OCI-LY7 (cell line): ENCODE measurements at regions of chr11 and their contacts with region 1.

Region 1: GRCh38 chr11:10792398-10792975 is 16.2 kb downstream of the EIF4G2 start:
- DNase-seq: peak; percentile 82
- H3K4me3 ChIP-seq: no peak overlapping the region
- H3K27ac ChIP-seq: no peak overlapping the region
- H3K4me1 ChIP-seq: no peaks in the 10 kb centered on the region
- CTCF ChIP-seq: peak; percentile 88

Region 2: GRCh38 chr11:10455637-10456487 is 336.6 kb before region 1 on chr11:
- CTCF ChIA-PET with region 1: no interaction called
- POLR2A ChIA-PET with region 1: no interaction called
- intact Hi-C with region 1: no loop called
- DNase-seq: peak; percentile 93
- H3K4me3 ChIP-seq: peak overlapping the region; percentile 73
- H3K27ac ChIP-seq: peak overlapping the region; percentile 93
- H3K4me1 ChIP-seq: peaks cover 72% of the 10 kb centered on the region
- CTCF ChIP-seq: no peak

Region 3: GRCh38 chr11:10803676-10804075 is 11.2 kb after region 1 on chr11:
- CTCF ChIA-PET with region 1: no interaction called
- POLR2A ChIA-PET with region 1: interaction called, 14 read pairs
- intact Hi-C with region 1: no loop called
- DNase-seq: no peak
- H3K4me3 ChIP-seq: no peak overlapping the region
- H3K27ac ChIP-seq: no peak overlapping the region
- H3K4me1 ChIP-seq: peaks cover 26% of the 10 kb centered on the region
- CTCF ChIP-seq: no peak

Region 4: GRCh38 chr11:10838083-10838482 is 45.6 kb after region 1 on chr11:
- CTCF ChIA-PET with region 1: no interaction called
- POLR2A ChIA-PET with region 1: no interaction called
- intact Hi-C with region 1: no loop called
- DNase-seq: no peak
- H3K4me3 ChIP-seq: no peak overlapping the region
- H3K27ac ChIP-seq: no peak overlapping the region
- H3K4me1 ChIP-seq: peaks cover 5% of the 10 kb centered on the region
- CTCF ChIP-seq: no peak

Region 5: DNA sequence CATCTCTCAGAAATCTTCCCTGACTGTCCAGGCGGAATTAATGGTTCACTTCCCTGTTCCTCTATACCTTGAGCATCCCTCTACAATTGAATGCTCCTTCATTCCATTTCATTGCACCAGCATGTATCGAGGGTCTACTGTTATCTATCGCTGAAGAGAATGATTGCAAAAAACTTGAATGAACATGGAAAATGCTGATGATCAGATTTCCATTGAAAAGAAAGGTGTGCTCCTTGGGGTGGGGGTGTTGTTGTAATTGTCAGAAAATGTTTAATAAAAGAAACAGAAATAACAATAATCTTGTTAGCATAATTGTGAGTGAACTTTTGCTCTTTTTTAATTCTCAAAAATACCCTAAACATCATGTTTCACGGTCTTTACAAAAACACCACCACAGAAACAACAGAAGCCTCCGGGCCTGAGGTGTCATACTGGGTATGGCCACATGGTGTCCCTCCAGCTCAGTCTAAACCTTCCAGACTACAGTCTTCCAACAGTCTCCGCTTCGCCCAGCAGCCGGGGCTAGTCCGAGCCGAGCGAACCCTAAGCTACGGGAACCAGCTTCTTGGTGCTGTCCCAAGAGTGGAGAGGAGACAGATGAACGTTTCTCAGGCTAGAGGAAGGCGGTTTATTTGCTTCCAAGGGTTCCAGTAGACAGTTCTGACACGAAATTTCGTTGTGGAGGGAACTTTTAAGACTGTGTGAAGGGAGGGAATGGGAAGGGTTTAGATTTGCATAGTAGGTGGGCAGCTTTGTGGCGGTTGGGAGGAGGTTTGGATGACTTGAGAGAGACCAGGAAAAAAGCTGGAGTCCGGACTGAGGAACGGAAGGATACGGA is 141.2 kb after region 1 on chr11:
- CTCF ChIA-PET with region 1: interaction called, 6 read pairs
- POLR2A ChIA-PET with region 1: no interaction called
- intact Hi-C with region 1: loop called (anchors 2 kb)
- DNase-seq: peak; percentile 80
- H3K4me3 ChIP-seq: peak overlapping the region; percentile 49
- H3K27ac ChIP-seq: no peak overlapping the region
- H3K4me1 ChIP-seq: peaks cover 6% of the 10 kb centered on the region
- CTCF ChIP-seq: peak; percentile 98

Region 6: DNA sequence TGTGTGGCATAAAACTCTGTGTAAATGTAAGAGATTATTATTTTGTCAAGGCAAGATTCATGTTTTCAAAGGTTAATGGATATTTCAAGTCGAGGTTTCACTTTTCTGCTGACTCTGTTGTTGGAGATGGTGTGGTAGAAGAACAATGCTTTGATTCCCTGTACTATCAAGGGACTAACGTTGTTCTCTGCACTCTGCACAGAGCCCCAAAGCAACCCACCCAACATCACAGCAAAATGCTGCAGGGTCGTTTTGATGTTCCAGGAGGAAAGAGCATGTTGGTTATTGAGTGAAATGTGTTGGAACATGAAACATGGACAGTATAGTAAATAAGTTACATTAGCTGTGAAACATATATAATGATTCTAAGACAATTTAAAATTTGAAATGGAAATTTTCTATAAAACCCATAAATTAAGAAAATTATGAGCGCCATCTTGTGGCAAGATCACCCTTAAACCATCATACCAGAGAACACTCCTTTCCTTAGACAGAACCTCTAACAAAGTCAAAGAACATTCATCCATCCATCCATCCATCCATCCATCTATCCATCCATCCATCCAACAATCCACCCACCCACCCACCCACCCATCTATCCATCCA is 229.7 kb after region 1 on chr11:
- CTCF ChIA-PET with region 1: interaction called, 7 read pairs
- POLR2A ChIA-PET with region 1: interaction called, 5 read pairs
- intact Hi-C with region 1: loop called (anchors 1 kb)
- DNase-seq: peak; percentile 38
- H3K4me3 ChIP-seq: no peak overlapping the region
- H3K27ac ChIP-seq: no peak overlapping the region
- H3K4me1 ChIP-seq: no peaks in the 10 kb centered on the region
- CTCF ChIP-seq: peak; percentile 78

Region 7: DNA sequence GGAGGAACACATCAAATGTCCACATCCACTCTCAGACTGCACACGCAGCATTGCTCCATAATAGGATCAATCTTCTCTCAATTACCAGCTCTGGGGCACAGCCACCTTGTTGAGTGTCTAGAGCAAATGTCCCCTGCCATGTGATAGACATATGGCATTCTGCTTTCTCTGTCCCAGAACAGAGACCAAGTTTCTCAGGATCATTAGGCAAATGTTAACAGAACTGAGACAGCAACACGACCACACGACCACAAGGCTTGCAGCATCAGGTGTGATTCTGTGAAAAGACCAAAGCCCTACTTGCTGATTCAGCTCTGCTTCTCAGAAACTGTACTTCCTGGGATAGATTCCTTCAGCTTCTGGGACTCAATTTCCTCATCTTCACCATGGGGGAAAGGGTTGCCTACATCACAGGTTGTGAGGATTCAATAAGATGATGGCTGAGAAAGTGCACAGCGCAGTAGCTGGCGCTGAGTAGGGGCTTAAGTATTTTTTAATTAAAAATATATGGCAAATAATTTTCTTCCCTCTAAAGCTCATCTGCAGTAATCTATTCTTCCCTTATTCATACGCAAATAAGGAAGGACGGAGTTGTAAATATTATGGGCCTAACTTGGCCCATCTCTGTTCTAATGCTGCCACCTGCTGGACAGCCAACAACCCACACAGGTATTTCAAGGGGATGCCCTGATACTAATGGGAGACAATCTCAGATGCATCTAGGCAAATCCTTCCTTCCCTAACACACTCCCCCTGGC is 995.0 kb after region 1 on chr11:
- CTCF ChIA-PET with region 1: no interaction called
- POLR2A ChIA-PET with region 1: no interaction called
- intact Hi-C with region 1: loop called (anchors 5 kb)
- DNase-seq: peak; percentile 64
- H3K4me3 ChIP-seq: no peak overlapping the region
- H3K27ac ChIP-seq: no peak overlapping the region
- H3K4me1 ChIP-seq: no peaks in the 10 kb centered on the region
- CTCF ChIP-seq: peak; percentile 93